Adrenal gland (tissue), 19 donors: ENCODE measurements at regions of chr20 and their contacts with region 1.

Region 1: GRCh38 chr20:48295445-48295963 is 510.2 kb upstream of the SULF2 start:
- DNase-seq: peak; percentile 38 to 81 (median 65)
- H3K4me3 ChIP-seq: no peak overlapping the region
- H3K27ac ChIP-seq: peak overlapping the region in 4 of 5 donors; percentile 35 to 76 (median 64)
- H3K4me1 ChIP-seq: peaks cover 6 to 13% of the 10 kb centered on the region in 2 donors
- H3K27me3 ChIP-seq: no peaks in the 10 kb centered on the region
- CTCF ChIP-seq: peak in 5 of 6 experiments; percentile 34 to 57 (median 45)
- POLR2A ChIP-seq: no peak

Region 2: DNA sequence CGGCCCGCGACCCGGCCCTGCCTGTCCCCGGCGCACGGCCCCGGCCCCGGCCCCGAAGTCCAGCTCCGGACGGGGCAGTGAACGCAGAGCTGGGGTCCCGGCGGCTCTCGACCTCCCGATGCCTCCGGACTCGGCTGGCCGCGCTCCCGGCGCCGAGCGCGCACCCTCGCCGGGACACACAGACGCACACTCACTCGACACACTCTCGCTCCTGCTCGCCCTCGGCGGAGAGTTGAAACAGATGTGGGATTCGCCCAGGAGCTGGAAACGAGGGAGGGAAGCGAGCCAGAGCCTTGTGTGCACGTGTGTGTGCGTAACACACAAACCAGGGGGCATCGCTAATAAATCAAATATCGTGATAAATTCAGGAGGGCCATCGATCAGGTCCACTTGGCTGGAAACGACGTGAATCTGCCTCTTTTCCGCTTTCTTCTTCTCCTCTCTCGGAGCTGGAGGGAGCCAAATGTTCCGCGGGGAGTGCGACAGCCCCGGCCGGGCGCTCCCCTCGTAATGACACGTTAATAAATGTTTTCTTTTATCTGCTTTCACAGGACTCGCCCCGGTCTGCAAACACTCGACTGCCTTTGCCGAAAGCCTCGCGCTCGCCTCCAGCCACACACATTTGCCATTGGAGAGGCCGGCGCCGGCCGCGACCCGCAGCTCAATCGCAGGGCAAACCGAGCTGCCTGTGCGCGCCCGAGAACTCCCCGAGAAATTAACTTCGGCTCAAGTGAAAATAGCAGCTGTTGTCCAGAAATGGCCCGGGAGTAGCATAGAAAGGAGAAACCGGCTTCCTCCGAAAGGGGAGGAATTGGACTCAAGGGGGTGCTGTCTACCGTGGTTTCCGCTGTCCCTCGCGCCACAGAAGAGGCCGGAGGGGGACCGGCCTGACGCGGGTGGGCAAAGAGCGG is 509.4 kb before region 1 on chr20:
- intact Hi-C with region 1: loop called in 1 of 2 experiments (anchors 10 kb)
- DNase-seq: peak; percentile 61 to 85 (median 71)
- H3K4me3 ChIP-seq: peak overlapping the region in 2 of 4 donors; percentile 1 to 50
- H3K27ac ChIP-seq: peak overlapping the region in 4 of 5 donors; percentile 12 to 87 (median 50)
- H3K4me1 ChIP-seq: peaks cover 7 to 24% of the 10 kb centered on the region in 2 donors
- H3K27me3 ChIP-seq: no peaks in the 10 kb centered on the region
- CTCF ChIP-seq: peak; percentile 47 to 79 (median 62)
- POLR2A ChIP-seq: peak in 1 of 2 donors; percentile 20